GM10248 (cell line): ENCODE measurements at regions of chr16 and their contacts with region 1.

Region 1: GRCh38 chr16:17313085-17313611 is 157.6 kb downstream of the XYLT1 start:
- DNase-seq: no peak
- CTCF ChIP-seq: no peak

Region 2: GRCh38 chr16:17301593-17302135 is 11.5 kb before region 1 on chr16:
- CTCF ChIA-PET with region 1: interaction called, 17 read pairs
- POLR2A ChIA-PET with region 1: interaction called, 3 read pairs
- DNase-seq: peak; percentile 72
- CTCF ChIP-seq: no peak

Region 3: DNA sequence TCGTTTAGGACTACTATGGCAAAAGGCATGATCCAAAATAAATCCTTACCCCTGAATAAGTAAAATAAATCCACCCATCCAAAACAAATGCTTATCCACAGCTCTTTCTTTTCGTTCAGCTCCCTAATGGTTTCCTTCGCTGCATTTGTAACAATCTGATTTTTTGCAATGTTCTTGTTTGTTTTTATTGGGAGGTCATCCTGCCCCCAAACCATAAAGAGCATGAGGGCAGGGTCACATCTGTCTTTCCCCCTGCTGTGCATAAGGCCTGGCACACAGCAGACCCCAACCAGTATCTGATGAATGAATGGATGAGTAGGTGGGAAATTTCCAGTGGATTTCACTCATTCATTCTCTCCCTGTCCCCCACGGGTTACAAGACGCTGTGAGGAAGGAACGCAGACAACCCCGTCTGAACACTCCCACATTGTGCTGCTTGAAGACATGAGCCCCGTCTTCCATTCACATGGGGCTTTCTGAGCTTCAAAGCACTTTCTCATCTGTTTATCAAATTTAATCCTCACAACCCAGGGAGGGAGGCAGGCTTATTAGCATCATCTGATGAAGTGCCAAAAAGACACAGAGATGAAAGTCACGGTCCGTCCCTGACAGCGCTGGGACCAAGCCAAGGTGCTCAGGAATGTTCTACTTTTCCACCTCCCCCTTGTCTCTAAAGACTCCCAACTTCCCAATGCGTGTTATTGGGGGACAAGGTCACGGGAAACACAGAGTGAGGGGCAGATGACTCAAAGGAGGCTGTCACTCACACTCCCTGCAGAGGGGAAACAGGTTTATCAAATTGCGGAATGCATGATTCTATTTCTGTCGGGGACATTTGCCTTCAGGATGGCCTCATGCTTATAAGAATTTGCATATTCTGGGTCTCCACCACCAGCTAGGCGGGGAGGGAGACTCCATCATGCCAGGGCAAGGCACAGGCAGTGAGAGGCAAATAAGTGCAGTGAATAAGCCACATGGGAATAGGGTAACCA is 146.7 kb after region 1 on chr16:
- CTCF ChIA-PET with region 1: no interaction called
- POLR2A ChIA-PET with region 1: no interaction called
- DNase-seq: peak; percentile 42
- CTCF ChIP-seq: no peak